Motor neuron (in vitro differentiated cells): ENCODE measurements at regions of chr3 and their contacts with region 1.

Region 1: DNA sequence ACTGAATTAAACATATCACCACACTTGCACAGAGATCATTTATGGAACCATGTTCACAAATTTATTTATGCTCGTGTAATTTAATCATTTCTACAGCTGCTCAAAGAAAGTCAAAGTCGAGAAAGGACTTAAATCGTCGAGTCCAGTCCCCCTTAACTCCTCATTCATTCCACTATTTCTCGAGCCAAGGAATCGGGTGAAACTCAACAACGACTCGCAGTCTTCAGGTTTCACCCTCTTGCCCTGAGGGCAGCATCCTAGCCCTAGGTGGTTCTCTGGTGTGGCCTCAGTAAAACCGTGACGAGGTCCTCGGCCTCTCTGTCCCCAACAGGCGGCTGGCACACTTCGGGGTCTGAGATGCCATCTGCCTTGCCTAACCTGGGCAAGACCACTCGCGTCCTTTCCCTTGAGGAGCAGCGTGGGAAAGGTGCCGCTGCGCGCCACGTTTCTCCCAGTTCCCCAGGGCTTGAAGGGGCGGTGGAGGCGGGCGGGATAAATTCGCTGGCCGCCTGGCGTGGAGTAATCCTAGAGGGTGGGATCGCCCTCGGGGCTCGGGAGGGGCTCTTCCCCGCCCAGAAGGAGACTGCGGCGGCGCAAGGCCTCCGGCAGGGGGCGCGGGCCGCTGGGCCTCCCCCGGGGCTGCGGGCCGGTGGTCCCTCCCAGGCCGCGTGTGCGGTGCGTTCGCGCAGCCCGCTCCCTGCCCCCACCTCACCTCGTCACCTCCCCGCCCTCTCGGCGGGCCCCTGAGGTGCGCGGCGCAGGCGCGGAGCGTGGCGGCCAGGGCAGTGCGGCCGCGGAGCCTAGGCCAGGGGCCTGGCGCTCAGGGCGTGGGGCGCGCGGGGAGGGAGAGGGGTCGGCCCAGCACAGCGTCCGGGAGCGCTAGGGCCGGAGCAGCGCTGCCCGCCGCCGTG is at the start of gene ZNF639:
- ATAC-seq: peak; percentile 74 to 92 (median 92)
- H3K4me3 ChIP-seq: peak within 1 kb of the TSS; percentile 71 to 87 (median 75)
- H3K27ac ChIP-seq: peak within 1 kb of the TSS; percentile 82 to 87
- H3K4me1 ChIP-seq: peaks cover 7 to 8% of the 10 kb centered on the region in 2 donors
- total RNA-seq, gene ZNF639: 22.5 to 49.8 (median 33.8) TPM

Region 2: GRCh38 chr3:178436773-178437172 is 885.8 kb before region 1 on chr3:
- in situ Hi-C with region 1: loop called in 1 of 9 experiments (anchors 25 kb)
- ATAC-seq: peak in 2 of 8 experiments; percentile 10 to 17
- H3K4me3 ChIP-seq: no peak overlapping the region
- H3K27ac ChIP-seq: no peak overlapping the region
- H3K4me1 ChIP-seq: peaks cover 14 to 17% of the 10 kb centered on the region in 2 donors

Region 3: GRCh38 chr3:179015551-179016020 is 307.0 kb before region 1 on chr3:
- in situ Hi-C with region 1: loop called in 7 of 9 experiments (anchors 10 to 25 kb)
- ATAC-seq: peak; percentile 54 to 90 (median 72)
- H3K4me3 ChIP-seq: no peak overlapping the region
- H3K27ac ChIP-seq: no peak overlapping the region
- H3K4me1 ChIP-seq: peaks cover 0 to 4% of the 10 kb centered on the region in 2 donors

Region 4: DNA sequence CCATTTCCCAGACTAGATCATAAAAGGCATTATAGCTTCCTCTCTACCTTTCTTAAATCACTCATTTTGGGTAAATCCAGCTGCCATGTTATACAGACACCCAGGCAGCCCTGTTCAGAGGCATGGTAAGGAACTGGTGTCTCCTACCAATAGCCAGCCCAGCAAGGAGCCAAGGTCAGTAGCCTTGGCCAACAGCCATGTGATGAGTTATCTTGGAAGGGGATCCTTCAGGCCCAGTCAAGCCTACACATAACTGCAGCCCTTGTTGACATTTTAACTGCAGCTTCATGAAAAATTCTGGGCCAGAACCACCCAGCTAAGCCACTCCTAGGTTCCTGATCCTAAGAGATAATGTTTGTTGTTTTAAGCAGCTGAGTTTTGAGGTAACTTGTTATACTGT is 221.9 kb before region 1 on chr3:
- in situ Hi-C with region 1: loop called in 2 of 9 experiments (anchors 25 kb)
- ATAC-seq: peak in 2 of 8 experiments; percentile 60 to 62
- H3K4me3 ChIP-seq: no peak overlapping the region
- H3K27ac ChIP-seq: no peak overlapping the region
- H3K4me1 ChIP-seq: no peaks in the 10 kb centered on the region

Region 5: GRCh38 chr3:179147873-179148615 is 174.5 kb before region 1 on chr3 and contains the start of gene PIK3CA:
- in situ Hi-C with region 1: loop called in 1 of 9 experiments (anchors 25 kb)
- ATAC-seq: peak; percentile 73 to 92 (median 88)
- H3K4me3 ChIP-seq: peak within 1 kb of the TSS; percentile 63 to 93 (median 81)
- H3K27ac ChIP-seq: peak within 1 kb of the TSS; percentile 90 to 93
- H3K4me1 ChIP-seq: peaks cover 2 to 11% of the 10 kb centered on the region in 2 donors
- total RNA-seq, gene PIK3CA: 13.4 to 21.7 (median 16.1) TPM

Region 6: GRCh38 chr3:179512378-179512777 is 189.8 kb after region 1 on chr3:
- in situ Hi-C with region 1: no loop called
- ATAC-seq: peak in 5 of 8 experiments; percentile 52 to 91 (median 84)
- H3K4me3 ChIP-seq: no peak overlapping the region
- H3K27ac ChIP-seq: peak overlapping the region in 1 of 2 donors; percentile 38
- H3K4me1 ChIP-seq: peaks cover 7 to 10% of the 10 kb centered on the region in 2 donors